Prostate gland (tissue), 2 donors: ENCODE measurements at regions of chr12 and their contacts with region 1.

Region 1: GRCh38 chr12:51897181-51897580 is 9.3 kb downstream of the ANKRD33 start:
- DNase-seq: no peak
- H3K4me3 ChIP-seq: no peak overlapping the region
- H3K27ac ChIP-seq: no peak overlapping the region
- H3K4me1 ChIP-seq: no peaks in the 10 kb centered on the region
- H3K27me3 ChIP-seq: no peaks in the 10 kb centered on the region
- CTCF ChIP-seq: no peak
- POLR2A ChIP-seq: no peak

Region 2: GRCh38 chr12:51980051-51980808 is 83.0 kb after region 1 on chr12:
- intact Hi-C with region 1: loop called (anchors 2 kb)
- DNase-seq: peak; percentile 64
- H3K4me3 ChIP-seq: no peak overlapping the region
- H3K27ac ChIP-seq: no peak overlapping the region
- H3K4me1 ChIP-seq: no peaks in the 10 kb centered on the region
- H3K27me3 ChIP-seq: no peaks in the 10 kb centered on the region
- CTCF ChIP-seq: peak; percentile 93 to 97 (median 97)
- POLR2A ChIP-seq: no peak